Right ventricle myocardium superior (tissue), 1 donor: ENCODE measurements at regions of chr9 and their contacts with region 1.

Region 1: DNA sequence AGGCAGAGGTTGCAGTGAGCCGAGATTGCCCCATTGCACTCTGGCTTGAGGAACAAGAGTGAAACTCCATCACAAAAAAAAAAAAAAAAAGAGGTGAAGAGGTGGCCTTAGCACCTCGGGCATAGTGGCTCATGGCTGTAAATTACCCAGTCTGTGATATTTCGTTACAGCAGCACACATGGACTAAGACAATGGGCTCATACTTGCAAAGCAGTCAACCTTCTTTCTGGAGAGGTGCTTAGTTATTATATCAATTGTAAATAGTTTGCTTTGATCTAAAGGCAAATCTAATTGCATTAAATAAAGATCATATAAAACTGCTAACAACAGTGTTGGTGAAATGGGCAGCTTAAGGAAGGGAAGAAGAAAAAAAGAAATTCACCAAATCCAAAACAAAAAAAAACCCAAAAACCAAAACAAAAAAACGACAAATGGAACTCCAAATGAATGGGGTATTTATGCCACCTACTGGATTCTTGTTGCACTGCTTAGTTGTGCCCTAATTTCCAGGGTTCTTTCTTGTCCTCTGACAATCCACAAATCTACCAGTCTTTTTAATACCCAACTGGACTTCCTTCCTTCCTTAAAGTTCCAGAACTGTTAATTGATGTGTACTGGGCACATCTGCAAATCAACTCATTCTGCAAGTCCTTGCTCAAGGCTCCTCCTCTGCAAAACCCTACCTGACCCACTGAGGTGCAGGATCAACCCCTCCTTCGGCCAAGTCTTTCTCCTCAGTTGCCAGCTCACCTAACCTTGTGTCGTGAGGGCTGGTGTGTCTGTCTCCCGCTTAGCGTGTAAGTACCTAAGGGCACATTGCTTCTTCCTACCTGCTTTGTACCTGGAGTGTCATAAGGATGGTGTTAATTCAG is 35.0 kb upstream of the DMRT1 start:
- DNase-seq: no peak
- ATAC-seq: peak; percentile 38

Region 2: GRCh38 chr9:385818-386398 is 420.6 kb before region 1 on chr9:
- intact Hi-C with region 1: loop called (anchors 10 kb)
- DNase-seq: no peak
- ATAC-seq: peak; percentile 95

Region 3: GRCh38 chr9:763692-764524 is 42.6 kb before region 1 on chr9:
- intact Hi-C with region 1: no loop called
- DNase-seq: peak; percentile 78
- ATAC-seq: peak; percentile 97

Region 4: DNA sequence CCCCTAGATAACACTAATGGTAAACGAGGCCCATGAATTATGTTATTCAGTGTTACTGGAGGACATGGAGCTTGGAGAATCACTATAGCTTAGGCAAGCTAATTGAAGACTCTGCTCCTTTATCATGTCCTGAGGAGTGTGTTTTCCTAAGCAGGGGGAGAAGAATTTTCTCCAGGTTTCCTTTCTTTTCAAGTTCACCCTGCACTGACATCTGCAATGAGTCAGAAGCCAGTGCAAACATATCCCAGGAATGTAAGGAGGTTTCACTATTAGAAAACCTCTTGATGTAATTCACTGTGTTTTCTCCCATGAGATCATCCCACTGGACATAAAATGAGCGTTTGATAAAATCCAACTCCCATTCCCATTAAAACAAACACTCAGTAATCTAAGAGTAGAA is 319.2 kb after region 1 on chr9:
- intact Hi-C with region 1: no loop called
- DNase-seq: no peak
- ATAC-seq: no peak